PC-3 (cell line): ENCODE measurements at regions of chr1 and their contacts with region 1.

Region 1: DNA sequence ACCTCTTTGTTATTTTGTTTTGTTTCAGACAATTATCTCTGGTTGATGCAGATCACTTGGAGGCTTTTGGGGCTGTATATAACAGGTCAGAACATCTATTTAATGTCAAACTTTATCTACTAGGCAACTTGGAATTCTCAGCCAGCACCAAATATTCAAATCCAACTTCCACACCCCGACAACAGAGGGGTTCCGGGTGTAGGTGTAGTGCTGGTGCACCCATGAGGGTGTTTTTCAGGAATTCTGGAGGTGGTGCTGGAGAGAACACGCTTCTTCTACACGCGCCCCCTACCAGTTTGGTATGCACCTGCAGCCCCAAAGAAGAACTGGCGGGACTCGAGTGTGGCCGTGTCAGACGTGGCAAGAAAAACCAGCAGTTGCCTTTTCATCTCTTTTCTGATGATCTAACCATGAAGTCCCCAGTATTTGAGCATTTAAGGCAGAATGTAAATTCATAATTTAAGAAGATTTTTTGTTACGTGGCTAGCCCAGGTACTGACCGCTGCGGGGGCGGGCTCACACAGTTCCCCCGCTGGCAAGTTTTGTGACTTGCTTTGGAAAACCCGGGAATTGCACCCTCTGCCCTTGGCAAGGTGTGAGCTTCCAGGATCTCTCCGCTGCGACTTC is 462 bp upstream of the TLCD4 start:
- DNase-seq: peak; percentile 83
- ATAC-seq: peak; percentile 78
- H3K4me3 ChIP-seq: peak overlapping the region; percentile 88
- H3K27ac ChIP-seq: 0 out of 2 replicates have a peak overlapping the region, but pooled peaks have one; percentile 1
- H3K4me1 ChIP-seq: peaks cover 18% of the 10 kb centered on the region
- H3K27me3 ChIP-seq: no peaks in the 10 kb centered on the region
- CTCF ChIP-seq: peak; percentile 89

Region 2: GRCh38 chr1:94854458-94855306 is 262.0 kb before region 1 on chr1:
- CTCF ChIA-PET with region 1: no interaction called
- POLR2A ChIA-PET with region 1: no interaction called
- intact Hi-C with region 1: loop called (anchors 10 kb)
- DNase-seq: peak; percentile 99
- ATAC-seq: peak; percentile 84
- H3K4me3 ChIP-seq: peak overlapping the region; percentile 65
- H3K27ac ChIP-seq: peak overlapping the region; percentile 97
- H3K4me1 ChIP-seq: peaks cover 60% of the 10 kb centered on the region
- H3K27me3 ChIP-seq: no peaks in the 10 kb centered on the region
- CTCF ChIP-seq: peak; percentile 92

Region 3: DNA sequence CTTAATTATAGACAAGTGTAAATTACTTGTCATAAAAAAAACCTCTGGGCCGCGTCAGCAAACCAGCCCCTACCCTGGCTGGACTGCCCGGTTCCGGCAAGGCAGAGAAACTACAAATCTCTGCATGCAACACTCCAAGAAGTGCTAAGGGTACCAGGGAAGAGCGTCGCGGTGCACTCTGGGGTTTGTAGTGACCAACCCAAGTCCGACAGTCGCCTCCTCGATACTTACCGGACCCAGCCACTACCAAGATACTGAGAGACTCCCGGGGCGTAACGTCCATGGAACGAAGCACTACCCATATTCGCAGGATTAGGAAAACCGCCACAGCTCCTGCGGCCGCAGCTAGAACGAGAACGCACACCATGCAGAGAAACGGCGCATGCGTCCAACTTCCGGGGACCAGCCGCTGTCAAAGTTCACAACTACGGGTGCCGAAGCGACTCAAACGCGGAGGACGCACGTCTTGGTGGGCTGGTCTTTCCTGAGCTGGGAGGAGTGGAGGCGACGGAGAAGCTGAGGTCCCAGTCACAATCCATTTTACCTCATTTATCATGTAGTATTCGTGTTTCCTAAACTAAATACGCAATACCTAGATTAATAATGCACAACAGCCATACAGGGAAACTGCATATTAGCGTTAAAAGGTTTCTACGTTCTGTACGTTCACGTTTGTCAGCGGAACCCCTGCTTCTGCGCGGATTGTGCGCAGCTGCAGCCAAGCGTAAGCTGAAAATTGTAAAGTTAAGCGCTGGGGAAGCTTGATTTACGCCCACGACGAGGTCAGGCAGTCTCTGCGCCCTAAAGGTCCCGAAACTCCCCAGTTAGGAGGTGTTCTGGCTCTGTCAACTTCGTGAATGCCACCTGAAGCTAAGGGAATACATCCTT is 43.9 kb before region 1 on chr1 and contains the start of gene ALG14:
- CTCF ChIA-PET with region 1: interaction called, 3 read pairs
- POLR2A ChIA-PET with region 1: interaction called, 5 read pairs
- intact Hi-C with region 1: loop called (anchors 2 kb)
- DNase-seq: peak; percentile 94
- ATAC-seq: peak; percentile 99
- H3K4me3 ChIP-seq: peak within 1 kb of the TSS; percentile 91
- H3K27ac ChIP-seq: peak within 1 kb of the TSS; percentile 78
- H3K4me1 ChIP-seq: peaks cover 16% of the 10 kb centered on the region
- H3K27me3 ChIP-seq: no peaks in the 10 kb centered on the region
- CTCF ChIP-seq: no peak
- total RNA-seq, gene ALG14: 3.4 and 9.7 TPM in 2 replicates

Region 4: GRCh38 chr1:95084317-95085176 is 32.1 kb before region 1 on chr1:
- CTCF ChIA-PET with region 1: interaction called, 6 read pairs
- POLR2A ChIA-PET with region 1: no interaction called
- intact Hi-C with region 1: loop called (anchors 1 kb)
- DNase-seq: peak; percentile 77
- ATAC-seq: peak; percentile 92
- H3K4me3 ChIP-seq: no peak overlapping the region
- H3K27ac ChIP-seq: peak overlapping the region; percentile 71
- H3K4me1 ChIP-seq: peaks cover 34% of the 10 kb centered on the region
- H3K27me3 ChIP-seq: no peaks in the 10 kb centered on the region
- CTCF ChIP-seq: peak; percentile 88

Region 5: DNA sequence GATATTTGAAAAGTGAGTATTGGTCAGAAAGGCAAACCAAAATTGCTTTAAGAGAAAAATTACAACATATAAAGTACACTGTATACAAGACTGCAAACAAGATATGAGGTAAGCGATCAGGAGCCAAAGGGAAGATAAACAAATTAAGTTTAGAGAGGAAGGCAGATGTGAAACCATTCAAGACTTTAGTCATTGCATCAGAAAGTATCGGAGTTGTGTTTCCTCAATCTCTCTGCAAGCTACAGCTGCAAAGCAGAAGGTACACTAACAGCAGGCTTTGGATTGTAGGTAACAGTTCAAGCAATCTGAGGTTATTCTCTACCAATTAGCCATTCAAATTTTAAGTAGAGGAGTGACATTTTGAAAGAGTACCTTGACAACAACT is 20.9 kb before region 1 on chr1:
- CTCF ChIA-PET with region 1: interaction called, 3 read pairs
- POLR2A ChIA-PET with region 1: interaction called, 3 read pairs
- intact Hi-C with region 1: loop called (anchors 1 kb)
- DNase-seq: peak; percentile 54
- ATAC-seq: peak; percentile 47
- H3K4me3 ChIP-seq: peak overlapping the region; percentile 24
- H3K27ac ChIP-seq: peak overlapping the region; percentile 76
- H3K4me1 ChIP-seq: peaks cover 28% of the 10 kb centered on the region
- H3K27me3 ChIP-seq: no peaks in the 10 kb centered on the region
- CTCF ChIP-seq: no peak